Right ventricle myocardium superior (tissue), 1 donor: ENCODE measurements at regions of chr21 and their contacts with region 1.

Region 1: DNA sequence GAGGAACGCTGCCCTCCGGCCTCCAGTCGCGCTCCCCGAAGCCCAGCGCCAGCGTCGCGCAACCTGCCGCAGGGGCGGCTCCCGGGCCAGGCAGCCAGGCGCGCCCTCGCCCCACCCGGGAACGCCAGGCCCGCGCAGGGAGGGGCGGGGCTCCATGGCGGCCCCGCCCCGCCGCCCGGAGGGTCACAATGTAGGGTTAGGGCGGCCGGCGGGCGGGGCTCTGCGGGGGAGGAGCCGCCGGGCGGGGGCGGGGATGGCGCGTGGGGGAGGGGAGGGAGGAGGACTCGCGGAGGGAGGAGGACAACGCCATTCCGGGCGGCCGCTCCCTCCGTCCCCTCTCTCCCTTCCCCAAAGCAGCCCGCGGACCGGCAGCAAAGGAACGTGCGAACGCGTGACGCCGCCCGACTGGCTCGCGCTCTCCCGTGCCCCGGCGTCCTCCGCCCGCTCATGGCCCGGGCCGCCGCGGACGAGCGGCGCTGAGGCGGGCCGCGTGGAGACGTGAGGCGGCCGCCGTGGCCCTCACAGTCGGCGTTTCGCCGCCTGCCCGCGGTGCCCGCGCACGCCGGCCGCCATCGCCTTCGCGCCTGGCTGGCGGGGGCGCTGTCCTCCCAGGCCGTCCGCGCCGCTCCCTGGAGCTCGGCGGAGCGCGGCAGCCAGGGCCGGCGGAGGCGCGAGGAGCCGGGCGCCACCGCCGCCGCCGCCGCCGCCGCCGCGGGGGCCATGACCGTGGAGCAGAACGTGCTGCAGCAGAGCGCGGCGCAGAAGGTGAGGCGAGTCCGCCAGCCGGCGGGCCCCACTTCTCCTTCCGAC is at the start of gene USP25:
- DNase-seq: peak; percentile 95
- ATAC-seq: peak; percentile 98
- total RNA-seq, gene USP25: 46.0 TPM

Region 2: GRCh38 chr21:15809818-15810217 is 79.9 kb after region 1 on chr21:
- intact Hi-C with region 1: loop called (anchors 10 kb)
- DNase-seq: no peak
- ATAC-seq: no peak